Esophagus muscularis mucosa (tissue), 4 donors: ENCODE measurements at regions of chr1 and their contacts with region 1.

Region 1: GRCh38 chr1:58903514-58904298 is 119.9 kb upstream of the JUN start:
- DNase-seq: peak; percentile 98
- H3K4me3 ChIP-seq: peak overlapping the region; percentile 58 to 68 (median 64)
- H3K27ac ChIP-seq: peak overlapping the region; percentile 94 to 99 (median 97)
- H3K4me1 ChIP-seq: peaks cover 19 to 47% (median 30%) of the 10 kb centered on the region in 4 donors
- H3K27me3 ChIP-seq: no peaks in the 10 kb centered on the region
- CTCF ChIP-seq: peak in 1 of 3 experiments; percentile 8
- EP300 ChIP-seq: no peak
- POLR2A ChIP-seq: peak; percentile 76

Region 2: GRCh38 chr1:58816072-58816746 is 87.5 kb before region 1 on chr1:
- intact Hi-C with region 1: loop called (anchors 2 kb)
- DNase-seq: peak; percentile 95
- H3K4me3 ChIP-seq: peak overlapping the region; percentile 65 to 73 (median 68)
- H3K27ac ChIP-seq: peak overlapping the region; percentile 91 to 96 (median 94)
- H3K4me1 ChIP-seq: peaks cover 27 to 37% (median 34%) of the 10 kb centered on the region in 4 donors
- H3K27me3 ChIP-seq: no peaks in the 10 kb centered on the region
- CTCF ChIP-seq: peak in 2 of 3 experiments; percentile 8 to 22
- EP300 ChIP-seq: peak; percentile 6
- POLR2A ChIP-seq: peak; percentile 26

Region 3: GRCh38 chr1:59699227-59699847 is 795.6 kb after region 1 on chr1:
- intact Hi-C with region 1: loop called (anchors 10 kb)
- DNase-seq: no peak
- H3K4me3 ChIP-seq: no peak overlapping the region
- H3K27ac ChIP-seq: peak overlapping the region in 2 of 4 donors; percentile 3 to 30
- H3K4me1 ChIP-seq: peaks cover 20 to 39% (median 32%) of the 10 kb centered on the region in 4 donors
- H3K27me3 ChIP-seq: no peaks in the 10 kb centered on the region
- CTCF ChIP-seq: peak; percentile 96 to 98 (median 97)
- EP300 ChIP-seq: no peak
- POLR2A ChIP-seq: no peak